Activated CD4-positive, alpha-beta T cell treated with anti-CD3 and anti-CD28 coated beads, Interleukin-2, amount 10 ng/mL, durations not matched to agents 7 days and 5 days (primary cell): ENCODE measurements at regions of chr19 and their contacts with region 1.

Region 1: DNA sequence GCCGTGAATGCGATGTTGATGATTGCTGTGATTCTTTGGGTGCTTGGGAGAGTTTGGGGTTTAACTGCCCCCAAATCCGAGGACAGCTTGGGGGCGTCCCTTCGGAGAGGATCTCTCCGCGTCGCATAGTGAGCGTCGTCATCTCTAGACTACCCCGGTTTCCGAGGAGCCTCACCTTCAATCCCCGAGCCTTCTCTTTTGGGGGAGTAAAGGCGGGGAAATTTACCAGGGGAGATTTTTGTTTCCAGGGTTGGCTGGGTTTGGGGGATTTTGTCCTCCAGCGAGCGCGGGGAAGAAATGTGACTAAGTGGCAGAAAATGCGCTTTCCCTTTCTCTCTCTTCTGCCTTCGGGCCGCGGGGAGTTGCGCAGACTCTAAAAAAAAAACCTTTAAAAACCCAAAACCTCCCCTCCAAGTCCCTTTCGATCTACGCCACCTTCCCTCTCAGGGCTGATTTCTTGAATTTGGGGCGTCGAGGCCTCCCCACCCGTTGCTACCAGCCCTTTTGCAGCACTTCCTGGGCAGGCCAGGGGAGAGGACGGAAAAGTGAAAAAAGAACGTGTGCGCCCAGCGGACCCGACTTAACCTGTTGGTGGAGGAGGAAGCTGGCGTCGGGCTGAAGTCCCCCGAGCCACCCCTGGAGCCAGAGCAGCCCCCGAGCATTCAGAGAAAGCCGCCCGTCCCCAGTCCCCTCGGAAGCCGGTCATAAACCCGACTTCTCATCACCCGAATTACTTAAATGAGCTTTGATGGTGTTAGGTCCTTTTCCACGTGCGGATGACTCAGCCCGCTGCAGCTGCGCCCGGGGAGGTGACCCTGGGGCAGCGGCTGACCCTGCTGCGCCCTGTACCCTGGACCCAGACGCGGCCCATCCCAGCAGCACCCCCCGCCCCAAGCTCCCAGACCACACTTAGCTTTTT is 17.7 kb downstream of the NFIX start:
- DNase-seq: peak; percentile 22
- H3K4me3 Mint-ChIP-seq: peak overlapping the region; percentile 62
- H3K27ac Mint-ChIP-seq: peak overlapping the region; percentile 73
- H3K4me1 Mint-ChIP-seq: peaks cover 19% of the 10 kb centered on the region
- H3K27me3 Mint-ChIP-seq: peaks cover 74% of the 10 kb centered on the region

Region 2: GRCh38 chr19:12974301-12975220 is 38.4 kb before region 1 on chr19:
- CTCF ChIA-PET with region 1: no interaction called
- POLR2A ChIA-PET with region 1: no interaction called
- DNase-seq: no peak
- H3K4me3 Mint-ChIP-seq: no peak overlapping the region
- H3K27ac Mint-ChIP-seq: peak overlapping the region; percentile 25
- H3K4me1 Mint-ChIP-seq: no peaks in the 10 kb centered on the region
- H3K27me3 Mint-ChIP-seq: peaks cover 7% of the 10 kb centered on the region

Region 3: GRCh38 chr19:13001166-13001501 is 11.8 kb before region 1 on chr19:
- CTCF ChIA-PET with region 1: interaction called, 10 read pairs
- POLR2A ChIA-PET with region 1: no interaction called
- DNase-seq: no peak
- H3K4me3 Mint-ChIP-seq: no peak overlapping the region
- H3K27ac Mint-ChIP-seq: no peak overlapping the region
- H3K4me1 Mint-ChIP-seq: no peaks in the 10 kb centered on the region
- H3K27me3 Mint-ChIP-seq: peaks cover 11% of the 10 kb centered on the region